CD4-positive, alpha-beta T cell (primary cell): ENCODE measurements at regions of chr3 and their contacts with region 1.

Region 1: DNA sequence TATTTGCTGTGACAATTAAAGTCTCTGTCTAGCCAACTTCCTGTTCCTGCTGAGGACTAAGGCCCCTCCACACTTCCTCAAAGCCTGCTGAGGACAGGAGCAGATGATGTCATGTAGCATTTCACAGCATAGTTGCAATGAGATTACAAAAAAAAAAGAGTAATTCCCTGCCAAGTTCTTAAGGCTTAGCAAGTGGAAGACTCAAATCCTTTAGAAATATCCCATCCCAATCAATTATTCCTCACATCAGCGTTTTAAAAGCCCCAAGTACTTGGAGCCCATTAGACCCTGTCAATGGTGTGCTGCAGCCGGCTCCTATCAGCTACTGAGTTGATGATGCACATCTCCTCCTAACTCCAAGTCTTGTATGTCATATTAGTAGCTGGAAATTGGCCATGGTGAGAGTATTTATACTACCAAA is 51.7 kb downstream of the TRANK1 start:
- DNase-seq: peak in 11 of 14 experiments; percentile 28 to 85 (median 37)
- ATAC-seq: peak; percentile 99
- H3K4me3 ChIP-seq: no peak overlapping the region
- H3K4me3 Mint-ChIP-seq: peak overlapping the region; percentile 68
- H3K27ac ChIP-seq: peak overlapping the region; percentile 0 to 65
- H3K27ac Mint-ChIP-seq: peak overlapping the region; percentile 99
- H3K4me1 ChIP-seq: peaks cover 40% of the 10 kb centered on the region
- H3K4me1 Mint-ChIP-seq: peaks cover 72% of the 10 kb centered on the region
- H3K27me3 ChIP-seq: no peaks in the 10 kb centered on the region
- H3K27me3 Mint-ChIP-seq: no peaks in the 10 kb centered on the region
- CTCF ChIP-seq: no peak

Region 2: DNA sequence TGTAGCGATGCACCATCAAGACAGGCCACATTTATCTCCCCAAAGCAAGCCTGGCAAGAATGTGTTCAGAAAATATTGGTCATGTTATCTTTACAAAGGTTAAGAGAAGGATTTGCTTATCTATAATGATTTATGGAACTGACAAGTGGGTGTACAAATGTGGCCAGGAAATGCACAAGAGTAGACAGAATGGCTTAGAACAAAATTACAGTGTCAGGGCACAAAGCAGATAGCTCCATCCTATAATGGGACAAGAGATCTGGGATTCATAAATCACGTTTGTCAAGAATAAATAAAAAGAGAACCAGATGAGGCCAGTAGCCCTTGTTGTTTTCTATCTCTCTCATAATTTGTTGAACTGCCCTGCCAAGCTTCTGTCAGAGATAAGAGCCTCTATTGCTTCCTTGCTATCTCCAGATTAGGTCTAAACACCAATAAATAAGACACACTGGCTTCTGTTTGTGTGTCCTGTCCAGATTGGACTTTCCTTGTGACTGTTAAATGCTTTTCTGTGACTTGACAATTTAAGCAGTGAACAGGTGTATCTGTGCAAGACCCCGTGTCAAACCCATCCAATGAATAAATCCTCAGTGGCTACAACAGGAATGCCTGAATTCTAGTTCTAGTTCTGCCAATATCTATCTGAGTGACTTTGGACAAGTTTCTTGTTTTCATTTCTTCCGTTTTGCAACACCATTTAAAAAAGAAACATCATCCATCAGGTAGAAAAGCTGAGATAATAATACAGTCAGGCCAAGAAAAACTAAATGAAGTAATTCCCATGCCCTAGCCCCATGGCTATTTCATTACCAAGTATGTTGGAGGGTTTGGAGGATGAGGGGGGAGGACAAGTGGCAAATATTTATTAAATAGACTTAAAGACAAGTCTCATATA is 286.0 kb before region 1 on chr3:
- CTCF ChIA-PET with region 1: no interaction called
- POLR2A ChIA-PET with region 1: no interaction called
- intact Hi-C with region 1: no loop called
- DNase-seq: no peak
- ATAC-seq: no peak
- H3K4me3 ChIP-seq: no peak overlapping the region
- H3K4me3 Mint-ChIP-seq: no peak overlapping the region
- H3K27ac ChIP-seq: no peak overlapping the region
- H3K27ac Mint-ChIP-seq: no peak overlapping the region
- H3K4me1 ChIP-seq: no peaks in the 10 kb centered on the region
- H3K4me1 Mint-ChIP-seq: no peaks in the 10 kb centered on the region
- H3K27me3 ChIP-seq: no peaks in the 10 kb centered on the region
- H3K27me3 Mint-ChIP-seq: peaks cover 26% of the 10 kb centered on the region
- CTCF ChIP-seq: no peak

Region 3: GRCh38 chr3:36876181-36876936 is 16.8 kb before region 1 on chr3:
- CTCF ChIA-PET with region 1: no interaction called
- POLR2A ChIA-PET with region 1: interaction called, 16 read pairs
- intact Hi-C with region 1: no loop called
- DNase-seq: peak in 6 of 14 experiments; percentile 6 to 90 (median 42)
- ATAC-seq: peak; percentile 92
- H3K4me3 ChIP-seq: peak overlapping the region; percentile 40
- H3K4me3 Mint-ChIP-seq: peak overlapping the region; percentile 69
- H3K27ac ChIP-seq: peak overlapping the region; percentile 77 to 80
- H3K27ac Mint-ChIP-seq: peak overlapping the region; percentile 96
- H3K4me1 ChIP-seq: peaks cover 23% of the 10 kb centered on the region
- H3K4me1 Mint-ChIP-seq: peaks cover 72% of the 10 kb centered on the region
- H3K27me3 ChIP-seq: no peaks in the 10 kb centered on the region
- H3K27me3 Mint-ChIP-seq: no peaks in the 10 kb centered on the region
- CTCF ChIP-seq: no peak

Region 4: GRCh38 chr3:36904641-36905040 is 11.5 kb after region 1 on chr3:
- CTCF ChIA-PET with region 1: interaction called, 5 read pairs
- POLR2A ChIA-PET with region 1: interaction called, 53 read pairs
- intact Hi-C with region 1: loop called in 1 of 2 experiments (anchors 1 kb)
- DNase-seq: no peak
- ATAC-seq: no peak
- H3K4me3 ChIP-seq: no peak overlapping the region
- H3K4me3 Mint-ChIP-seq: peak overlapping the region; percentile 52
- H3K27ac ChIP-seq: peak overlapping the region in 1 of 2 donors; percentile 17
- H3K27ac Mint-ChIP-seq: peak overlapping the region; percentile 93
- H3K4me1 ChIP-seq: peaks cover 75% of the 10 kb centered on the region
- H3K4me1 Mint-ChIP-seq: peaks cover 79% of the 10 kb centered on the region
- H3K27me3 ChIP-seq: no peaks in the 10 kb centered on the region
- H3K27me3 Mint-ChIP-seq: no peaks in the 10 kb centered on the region
- CTCF ChIP-seq: no peak